Ovary (tissue), 10 donors: ENCODE measurements at regions of chr2 and their contacts with region 1.

Region 1: GRCh38 chr2:11539317-11540152 is 5.7 kb downstream of the GREB1 start:
- DNase-seq: peak; percentile 75 to 90 (median 80)
- H3K4me3 ChIP-seq: peak overlapping the region; percentile 38
- H3K27ac ChIP-seq: peak overlapping the region; percentile 68 to 87
- H3K4me1 ChIP-seq: peaks cover 12% of the 10 kb centered on the region
- H3K27me3 ChIP-seq: no peaks in the 10 kb centered on the region
- CTCF ChIP-seq: no peak
- EP300 ChIP-seq: no peak
- POLR2A ChIP-seq: no peak

Region 2: DNA sequence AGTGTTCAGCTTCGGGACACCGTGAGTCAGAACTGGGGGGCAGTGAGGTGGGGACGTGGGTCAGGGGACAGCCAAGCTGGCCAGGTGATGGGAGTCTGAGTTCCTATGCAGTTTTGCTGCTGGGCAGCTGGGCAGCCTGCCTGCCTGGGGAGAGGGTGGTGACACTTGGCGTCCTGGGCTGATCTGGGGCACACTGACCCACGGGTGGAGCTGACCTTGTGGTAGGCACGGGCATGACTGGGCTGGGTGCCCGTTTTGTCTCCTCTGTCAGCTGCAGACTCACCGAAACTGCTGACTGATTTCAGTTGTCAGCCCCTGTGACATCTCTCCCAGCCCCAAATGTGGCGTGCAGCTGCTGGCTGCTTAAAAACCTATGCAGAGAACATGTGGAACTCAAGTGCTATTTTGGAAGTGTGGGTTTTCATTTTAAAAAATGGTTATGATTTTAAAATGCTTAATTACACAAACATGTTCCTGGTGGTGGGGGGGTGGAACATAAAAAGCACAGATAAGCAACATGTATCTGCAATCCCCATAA is 40.9 kb before region 1 on chr2:
- intact Hi-C with region 1: loop called in 1 of 4 experiments (anchors 5 kb)
- DNase-seq: peak; percentile 54 to 78 (median 76)
- H3K4me3 ChIP-seq: no peak overlapping the region
- H3K27ac ChIP-seq: peak overlapping the region; percentile 39 to 83
- H3K4me1 ChIP-seq: peaks cover 23% of the 10 kb centered on the region
- H3K27me3 ChIP-seq: no peaks in the 10 kb centered on the region
- CTCF ChIP-seq: no peak
- EP300 ChIP-seq: no peak
- POLR2A ChIP-seq: no peak

Region 3: GRCh38 chr2:11574176-11575030 is 34.9 kb after region 1 on chr2:
- intact Hi-C with region 1: loop called in 1 of 4 experiments (anchors 5 kb)
- DNase-seq: peak in 3 of 5 donors; percentile 38 to 52 (median 41)
- H3K4me3 ChIP-seq: no peak overlapping the region
- H3K27ac ChIP-seq: peak overlapping the region; percentile 15 to 71
- H3K4me1 ChIP-seq: peaks cover 20% of the 10 kb centered on the region
- H3K27me3 ChIP-seq: no peaks in the 10 kb centered on the region
- CTCF ChIP-seq: no peak
- EP300 ChIP-seq: no peak
- POLR2A ChIP-seq: no peak

Region 4: GRCh38 chr2:11583840-11584524 is 44.4 kb after region 1 on chr2:
- intact Hi-C with region 1: loop called in 2 of 4 experiments (anchors 2 to 5 kb)
- DNase-seq: peak; percentile 82 to 92 (median 85)
- H3K4me3 ChIP-seq: no peak overlapping the region
- H3K27ac ChIP-seq: peak overlapping the region; percentile 68 to 74
- H3K4me1 ChIP-seq: peaks cover 19% of the 10 kb centered on the region
- H3K27me3 ChIP-seq: no peaks in the 10 kb centered on the region
- CTCF ChIP-seq: peak; percentile 78 to 94 (median 94)
- EP300 ChIP-seq: no peak
- POLR2A ChIP-seq: no peak